ENCODE measurements at regions of chr5 and their contacts with region 1.

Region 1: GRCh38 chr5:119597728-119598298 is 31.5 kb upstream of the FAM170A start:
- DNase-seq: no peak
- ATAC-seq: no peak
- H3K4me3 ChIP-seq: no peak overlapping the region
- H3K27ac ChIP-seq: no peak overlapping the region
- H3K4me1 ChIP-seq: no peaks in the 10 kb centered on the region
- H3K27me3 ChIP-seq: no peaks in the 10 kb centered on the region
- CTCF ChIP-seq: no peak

Region 2: GRCh38 chr5:118156181-118156580 is 1441.6 kb before region 1 on chr5:
- CTCF ChIA-PET with region 1: no interaction called
- POLR2A ChIA-PET with region 1: no interaction called
- in situ Hi-C with region 1: no loop called
- intact Hi-C with region 1: no loop called
- DNase-seq: no peak
- ATAC-seq: no peak
- H3K4me3 ChIP-seq: no peak overlapping the region
- H3K27ac ChIP-seq: no peak overlapping the region
- H3K4me1 ChIP-seq: no peaks in the 10 kb centered on the region
- H3K27me3 ChIP-seq: no peaks in the 10 kb centered on the region
- CTCF ChIP-seq: no peak

Region 3: GRCh38 chr5:119255571-119256356 is 342.0 kb before region 1 on chr5:
- CTCF ChIA-PET with region 1: no interaction called
- POLR2A ChIA-PET with region 1: no interaction called
- in situ Hi-C with region 1: no loop called
- intact Hi-C with region 1: no loop called
- DNase-seq: no peak
- ATAC-seq: no peak; the same call in 1 of the 2 replicates
- H3K4me3 ChIP-seq: no peak overlapping the region
- H3K27ac ChIP-seq: no peak overlapping the region
- H3K4me1 ChIP-seq: no peaks in the 10 kb centered on the region
- H3K27me3 ChIP-seq: no peaks in the 10 kb centered on the region
- CTCF ChIP-seq: no peak

Region 4: GRCh38 chr5:119554597-119554996 is 43.2 kb before region 1 on chr5:
- CTCF ChIA-PET with region 1: no interaction called
- POLR2A ChIA-PET with region 1: no interaction called
- in situ Hi-C with region 1: no loop called
- intact Hi-C with region 1: no loop called
- DNase-seq: no peak
- ATAC-seq: no peak
- H3K4me3 ChIP-seq: no peak overlapping the region
- H3K27ac ChIP-seq: no peak overlapping the region
- H3K4me1 ChIP-seq: no peaks in the 10 kb centered on the region
- H3K27me3 ChIP-seq: no peaks in the 10 kb centered on the region
- CTCF ChIP-seq: no peak

Region 5: GRCh38 chr5:119629333-119629732 is 31.5 kb after region 1 on chr5 and contains the start of gene FAM170A:
- CTCF ChIA-PET with region 1: no interaction called
- POLR2A ChIA-PET with region 1: no interaction called
- in situ Hi-C with region 1: no loop called
- intact Hi-C with region 1: loop called (anchors 2 kb)
- DNase-seq: no peak
- ATAC-seq: no peak
- H3K4me3 ChIP-seq: no peak within 1 kb of the TSS
- H3K27ac ChIP-seq: no peak within 1 kb of the TSS
- H3K4me1 ChIP-seq: no peaks in the 10 kb centered on the region
- H3K27me3 ChIP-seq: no peaks in the 10 kb centered on the region
- CTCF ChIP-seq: no peak
- total RNA-seq, gene FAM170A: not detected